ENCODE measurements at regions of chr3 and their contacts with region 1.

Region 1: DNA sequence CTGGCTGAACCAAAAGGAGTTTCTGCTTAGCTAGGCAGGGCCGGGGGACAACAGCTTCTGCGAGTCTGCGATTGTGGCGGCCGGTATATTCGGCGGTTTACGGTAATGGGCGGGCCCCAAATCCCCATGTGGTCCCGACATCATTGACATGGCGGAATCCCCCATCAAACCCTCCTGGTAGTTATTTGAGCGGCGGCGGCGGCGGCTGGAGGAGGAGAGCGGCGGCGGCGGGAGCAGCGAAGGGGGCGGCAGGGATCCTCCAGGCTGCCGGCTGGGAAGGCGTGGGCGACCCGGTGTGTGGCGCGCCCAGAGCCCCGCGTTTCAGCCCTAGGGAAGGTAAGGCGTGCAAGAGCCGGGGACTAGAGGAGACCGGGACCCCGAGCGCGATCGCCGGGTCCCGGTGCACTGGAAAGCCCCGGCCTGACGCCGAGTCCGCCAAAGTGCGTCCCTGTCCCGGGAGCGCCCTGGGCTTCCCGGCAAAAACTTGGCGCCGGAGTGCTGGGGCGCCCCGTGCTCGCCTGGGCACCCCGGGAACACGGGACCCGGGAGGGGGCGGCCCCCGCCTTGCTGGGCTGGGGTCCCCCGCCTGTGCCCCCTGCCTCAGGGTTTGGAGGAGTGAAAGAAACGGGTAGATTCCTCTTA is at the start of gene FNDC3B:
- DNase-seq: peak; percentile 81
- ATAC-seq: peak; percentile 90
- H3K4me3 Mint-ChIP-seq: peak within 1 kb of the TSS; percentile 97
- H3K27ac Mint-ChIP-seq: peak within 1 kb of the TSS; percentile 88
- H3K4me1 Mint-ChIP-seq: peaks cover 7% of the 10 kb centered on the region
- H3K27me3 Mint-ChIP-seq: peaks cover 8% of the 10 kb centered on the region
- CTCF ChIP-seq: no peak
- total RNA-seq, gene FNDC3B: 8.0 and 9.3 TPM in 2 replicates

Region 2: GRCh38 chr3:171459942-171460724 is 579.4 kb before region 1 on chr3 and contains the start of gene TNIK:
- CTCF ChIA-PET with region 1: no interaction called
- POLR2A ChIA-PET with region 1: no interaction called
- intact Hi-C with region 1: loop called (anchors 10 kb)
- DNase-seq: peak; percentile 66
- ATAC-seq: peak; percentile 90
- H3K4me3 Mint-ChIP-seq: peak within 1 kb of the TSS; percentile 93
- H3K27ac Mint-ChIP-seq: peak within 1 kb of the TSS; percentile 77
- H3K4me1 Mint-ChIP-seq: peaks cover 39% of the 10 kb centered on the region
- H3K27me3 Mint-ChIP-seq: peaks cover 9% of the 10 kb centered on the region
- CTCF ChIP-seq: no peak
- total RNA-seq, gene TNIK: 2.0 and 2.5 TPM in 2 replicates

Region 3: DNA sequence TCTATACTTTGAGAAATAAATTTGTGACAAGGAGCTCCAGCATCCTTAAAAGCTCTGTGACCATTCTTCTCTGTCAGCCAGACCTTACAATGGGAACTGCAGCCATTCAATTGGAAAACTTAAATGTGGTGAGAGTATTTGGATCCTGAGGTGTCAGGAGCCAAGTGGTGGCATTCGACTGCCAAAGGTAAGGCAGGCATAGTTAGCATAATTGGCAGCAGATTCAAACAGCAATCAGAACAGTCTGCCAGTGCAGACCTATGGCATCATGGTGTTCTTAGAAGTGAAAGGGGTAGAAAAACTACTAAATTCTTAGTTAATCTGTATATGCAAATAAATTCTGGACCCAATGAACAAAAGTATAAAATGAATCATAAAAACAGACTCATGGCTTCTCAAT is 18.4 kb before region 1 on chr3:
- CTCF ChIA-PET with region 1: no interaction called
- POLR2A ChIA-PET with region 1: no interaction called
- intact Hi-C with region 1: no loop called
- DNase-seq: no peak
- ATAC-seq: no peak
- H3K4me3 Mint-ChIP-seq: no peak overlapping the region
- H3K27ac Mint-ChIP-seq: no peak overlapping the region
- H3K4me1 Mint-ChIP-seq: no peaks in the 10 kb centered on the region
- H3K27me3 Mint-ChIP-seq: peaks cover 6% of the 10 kb centered on the region
- CTCF ChIP-seq: no peak

Region 4: DNA sequence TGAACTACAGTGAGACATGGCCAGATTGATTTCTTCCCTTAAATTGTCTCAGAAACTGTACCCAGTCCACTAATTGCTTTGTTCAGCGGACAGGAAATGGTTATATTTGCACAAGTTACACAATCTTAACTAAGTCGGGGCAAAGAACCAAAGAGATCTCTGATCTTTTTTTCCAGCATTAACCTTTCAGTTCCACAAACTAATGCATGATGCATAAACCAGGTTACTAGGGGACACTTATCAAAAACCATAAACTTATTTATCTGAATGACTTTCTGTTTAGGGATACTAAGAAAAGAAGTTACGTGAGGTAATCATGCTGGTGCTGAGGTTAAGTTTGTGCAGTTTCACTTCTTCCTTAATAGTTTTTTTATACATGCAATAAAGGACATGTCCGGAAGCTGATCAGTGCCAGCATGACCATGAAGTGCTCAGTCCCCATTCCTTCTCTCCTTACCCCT is 22.2 kb after region 1 on chr3:
- CTCF ChIA-PET with region 1: interaction called, 5 read pairs
- POLR2A ChIA-PET with region 1: no interaction called
- intact Hi-C with region 1: loop called (anchors 1 kb)
- DNase-seq: no peak
- ATAC-seq: peak; percentile 93
- H3K4me3 Mint-ChIP-seq: peak overlapping the region; percentile 32
- H3K27ac Mint-ChIP-seq: no peak overlapping the region
- H3K4me1 Mint-ChIP-seq: peaks cover 26% of the 10 kb centered on the region
- H3K27me3 Mint-ChIP-seq: peaks cover 20% of the 10 kb centered on the region
- CTCF ChIP-seq: no peak

Region 5: GRCh38 chr3:172268868-172269267 is 229.3 kb after region 1 on chr3:
- CTCF ChIA-PET with region 1: no interaction called
- POLR2A ChIA-PET with region 1: no interaction called
- intact Hi-C with region 1: no loop called
- DNase-seq: no peak
- ATAC-seq: no peak
- H3K4me3 Mint-ChIP-seq: no peak overlapping the region
- H3K27ac Mint-ChIP-seq: no peak overlapping the region
- H3K4me1 Mint-ChIP-seq: peaks cover 5% of the 10 kb centered on the region
- H3K27me3 Mint-ChIP-seq: no peaks in the 10 kb centered on the region
- CTCF ChIP-seq: no peak

Region 6: DNA sequence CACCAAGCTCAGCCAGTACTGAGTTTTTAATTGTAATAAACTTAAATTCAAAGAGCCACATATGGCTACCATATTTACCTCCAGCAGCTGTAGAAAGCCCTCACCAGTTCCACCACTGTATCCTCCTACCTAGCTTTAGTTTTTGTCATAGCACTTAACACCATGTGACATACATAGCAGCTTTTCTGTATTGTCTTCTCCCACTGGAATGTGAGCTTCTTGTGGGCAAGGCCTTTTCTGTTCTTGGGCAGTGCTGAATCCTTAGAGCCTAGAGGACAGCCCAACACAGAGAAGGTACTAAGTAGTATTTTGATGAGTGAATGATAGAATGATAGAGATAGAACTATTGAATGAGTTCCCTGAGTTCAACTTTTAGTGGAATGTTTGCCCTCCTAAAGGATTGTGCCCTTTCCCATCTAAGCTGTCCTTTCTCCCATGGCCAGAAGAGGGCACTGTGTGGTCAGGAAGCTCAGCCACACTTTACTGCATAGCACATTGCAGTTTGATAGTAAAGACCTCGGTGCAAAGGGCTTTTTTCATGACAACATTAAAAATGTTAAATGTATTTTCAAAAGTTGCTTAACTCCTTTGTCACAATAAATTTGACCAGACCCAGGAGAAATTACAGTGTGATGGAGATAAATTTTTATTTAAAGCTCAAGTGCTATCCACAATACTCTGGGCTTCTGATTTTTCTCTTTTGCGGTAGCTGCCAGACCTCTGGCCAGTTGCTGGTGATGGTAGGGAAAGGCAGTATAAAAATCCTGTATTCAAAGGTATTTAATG is 292.9 kb after region 1 on chr3:
- CTCF ChIA-PET with region 1: interaction called, 11 read pairs
- POLR2A ChIA-PET with region 1: no interaction called
- intact Hi-C with region 1: no loop called
- DNase-seq: peak; percentile 26
- ATAC-seq: peak; percentile 85
- H3K4me3 Mint-ChIP-seq: no peak overlapping the region
- H3K27ac Mint-ChIP-seq: no peak overlapping the region
- H3K4me1 Mint-ChIP-seq: no peaks in the 10 kb centered on the region
- H3K27me3 Mint-ChIP-seq: no peaks in the 10 kb centered on the region
- CTCF ChIP-seq: peak; percentile 97

Region 7: GRCh38 chr3:172666873-172667694 is 627.5 kb after region 1 on chr3:
- CTCF ChIA-PET with region 1: no interaction called
- POLR2A ChIA-PET with region 1: no interaction called
- intact Hi-C with region 1: loop called (anchors 5 kb)
- DNase-seq: no peak
- ATAC-seq: peak; percentile 69
- H3K4me3 Mint-ChIP-seq: no peak overlapping the region
- H3K27ac Mint-ChIP-seq: no peak overlapping the region
- H3K4me1 Mint-ChIP-seq: peaks cover 14% of the 10 kb centered on the region
- H3K27me3 Mint-ChIP-seq: no peaks in the 10 kb centered on the region
- CTCF ChIP-seq: no peak

Region 8: DNA sequence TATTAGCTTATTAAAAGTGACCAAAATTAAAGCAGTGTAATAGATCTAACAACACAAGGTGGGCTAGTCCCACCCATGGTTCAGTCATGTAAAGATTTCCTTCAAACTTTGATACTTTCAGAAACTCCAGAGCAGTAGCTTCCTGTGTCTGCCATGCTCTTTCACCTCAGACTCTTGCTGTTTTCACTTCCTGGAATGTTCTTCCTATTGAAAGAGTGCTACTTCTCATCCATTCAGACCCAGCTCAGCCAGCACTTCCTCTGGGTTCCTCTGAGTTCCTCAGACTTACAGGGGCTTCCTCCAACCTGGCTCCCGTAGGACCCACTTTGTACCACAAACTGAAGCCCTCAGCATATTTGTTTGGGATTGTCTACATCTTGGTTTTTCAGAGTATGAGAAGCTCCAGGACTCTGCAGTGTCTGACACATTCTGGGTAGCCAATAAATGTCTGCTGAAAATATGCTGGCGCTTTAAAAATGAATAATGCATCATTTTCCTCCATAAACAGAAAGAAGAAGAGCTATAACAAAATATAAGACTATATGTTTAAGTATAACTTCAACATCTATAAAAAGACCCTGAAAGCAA is 653.3 kb after region 1 on chr3:
- CTCF ChIA-PET with region 1: no interaction called
- POLR2A ChIA-PET with region 1: no interaction called
- intact Hi-C with region 1: no loop called
- DNase-seq: no peak
- ATAC-seq: no peak
- H3K4me3 Mint-ChIP-seq: no peak overlapping the region
- H3K27ac Mint-ChIP-seq: peak overlapping the region; percentile 71
- H3K4me1 Mint-ChIP-seq: peaks cover 11% of the 10 kb centered on the region
- H3K27me3 Mint-ChIP-seq: no peaks in the 10 kb centered on the region
- CTCF ChIP-seq: no peak